BJ (cell line): ENCODE measurements at regions of chr1 and their contacts with region 1.

Region 1: GRCh38 chr1:28956038-28956464 is 41.7 kb downstream of the EPB41 start:
- DNase-seq: no peak
- H3K4me3 ChIP-seq: no peak overlapping the region
- H3K27me3 ChIP-seq: no peaks in the 10 kb centered on the region
- CTCF ChIP-seq: no peak

Region 2: DNA sequence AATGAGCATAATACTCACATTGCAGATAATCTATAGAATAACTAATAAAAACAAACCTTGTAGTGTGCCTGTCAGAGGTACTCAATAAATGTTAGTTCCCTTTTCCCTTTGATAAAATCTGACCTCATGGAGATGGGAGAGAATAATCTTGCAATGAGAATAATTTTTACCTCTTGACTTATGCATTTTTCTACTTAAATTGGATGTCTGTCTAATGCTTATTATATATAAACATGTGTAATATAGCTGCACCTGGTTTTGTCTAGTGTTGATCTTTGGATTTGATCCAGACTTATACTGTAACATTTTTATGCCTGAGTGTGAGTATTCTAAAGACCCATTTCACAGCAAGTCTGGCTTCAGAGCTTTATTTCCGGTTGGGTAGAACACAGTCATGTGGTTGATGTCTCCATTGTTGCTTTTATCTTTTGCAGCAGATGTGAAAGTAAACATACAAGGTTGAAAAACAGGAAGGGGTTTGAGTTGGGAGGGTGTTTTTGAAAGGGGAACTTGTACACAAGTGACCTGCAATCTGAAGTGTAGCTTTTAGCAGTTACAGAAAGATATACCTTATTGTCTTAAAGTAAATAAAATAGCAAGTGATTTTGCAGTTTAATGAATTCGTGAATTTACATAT is 29.3 kb before region 1 on chr1:
- CTCF ChIA-PET with region 1: no interaction called
- POLR2A ChIA-PET with region 1: interaction called, 10 read pairs
- DNase-seq: no peak
- H3K4me3 ChIP-seq: no peak overlapping the region
- H3K27me3 ChIP-seq: no peaks in the 10 kb centered on the region
- CTCF ChIP-seq: no peak

Region 3: GRCh38 chr1:29096231-29096886 is 140.3 kb after region 1 on chr1:
- CTCF ChIA-PET with region 1: no interaction called
- POLR2A ChIA-PET with region 1: no interaction called
- DNase-seq: no peak
- H3K4me3 ChIP-seq: no peak overlapping the region
- H3K27me3 ChIP-seq: no peaks in the 10 kb centered on the region
- CTCF ChIP-seq: no peak

Region 4: DNA sequence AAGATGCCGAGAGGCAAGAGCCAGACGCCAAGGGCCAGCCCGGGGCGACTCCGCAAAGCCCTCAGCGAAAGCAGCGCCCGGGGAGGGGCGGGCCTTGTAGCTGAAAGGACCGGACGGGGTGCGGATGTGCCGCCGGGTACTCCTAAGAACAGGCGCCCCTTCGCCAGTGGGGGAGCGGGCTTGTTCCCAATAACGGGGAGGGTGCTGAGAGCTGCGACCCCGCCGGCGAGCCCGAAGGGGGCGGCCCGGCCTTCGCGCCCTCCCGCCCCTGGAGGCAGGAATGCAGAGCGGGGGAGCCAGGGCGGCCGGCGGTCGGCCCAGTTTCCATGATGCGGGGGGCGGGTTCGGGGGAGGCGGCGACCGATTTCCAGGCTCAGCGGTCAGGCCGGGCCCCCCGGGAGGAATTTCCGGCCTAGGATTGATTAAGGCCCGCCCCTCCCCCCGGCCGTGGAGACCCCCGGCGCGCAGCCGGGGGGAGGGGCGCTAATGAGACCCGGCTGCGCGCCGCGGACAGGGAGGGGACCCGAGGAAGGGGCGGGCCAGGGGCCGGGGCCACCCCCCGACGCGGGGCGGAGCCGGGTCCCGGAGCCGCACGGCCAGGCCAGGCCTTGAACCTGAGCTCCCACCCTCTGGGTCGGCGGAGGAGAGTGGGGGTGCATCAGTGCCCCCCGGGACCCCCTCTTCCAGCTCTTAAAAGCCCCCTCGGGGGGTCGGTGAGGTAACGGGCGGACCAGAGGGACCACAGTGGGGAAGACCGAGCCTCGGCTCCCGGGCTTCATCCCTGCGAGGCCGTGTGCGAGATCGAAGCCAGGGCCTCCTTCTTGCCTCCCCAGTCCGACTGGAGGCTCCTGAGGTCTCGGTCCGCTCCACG is 168.6 kb after region 1 on chr1:
- CTCF ChIA-PET with region 1: no interaction called
- POLR2A ChIA-PET with region 1: no interaction called
- DNase-seq: no peak
- H3K4me3 ChIP-seq: peak overlapping the region; percentile 79
- H3K27me3 ChIP-seq: 0 out of 2 replicates have a peak, but pooled peaks cover 2% of the 10 kb centered on the region
- CTCF ChIP-seq: peak; percentile 69